ENCODE measurements at regions of chr1 and their contacts with region 1.

Region 1: DNA sequence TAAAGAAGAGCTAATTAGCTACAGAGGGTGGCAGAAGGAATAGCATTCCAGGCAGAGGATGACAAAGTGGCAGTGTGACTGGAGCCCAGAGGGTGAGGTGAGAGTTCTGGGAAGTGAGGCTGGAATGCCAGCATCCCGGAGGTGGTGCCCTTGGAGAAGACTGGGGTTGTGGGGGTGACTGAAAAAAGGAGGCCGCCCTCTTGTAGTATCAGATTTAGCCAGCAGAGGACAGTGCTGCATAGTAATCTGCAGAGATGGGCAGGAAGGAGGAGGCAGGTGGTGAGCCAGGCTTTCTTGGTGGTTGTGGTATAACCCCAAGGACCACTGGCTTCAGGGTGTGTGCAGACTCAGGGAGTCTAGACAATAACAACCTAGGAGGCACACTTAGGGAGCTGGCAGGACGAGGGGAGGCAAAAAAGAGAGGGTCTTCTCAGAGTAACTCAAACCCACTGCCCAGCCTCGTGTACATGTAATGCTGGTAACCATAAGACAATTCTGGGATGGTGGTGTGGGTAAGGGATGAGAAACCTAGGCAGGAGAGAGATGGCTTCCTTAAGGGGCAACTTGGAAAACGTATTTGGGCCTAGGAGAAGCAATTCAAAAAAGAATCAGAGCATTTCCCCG is 30.5 kb downstream of the MROH7 start:
- DNase-seq: peak; percentile 69 to 86 (median 80)
- ATAC-seq: peak; percentile 93
- H3K4me3 ChIP-seq: no peak overlapping the region
- H3K27ac ChIP-seq: no peak overlapping the region
- H3K4me1 ChIP-seq: no peaks in the 10 kb centered on the region
- H3K27me3 ChIP-seq: peaks cover 13 to 19% of the 10 kb centered on the region in 2 experiments; a peak in 4 of 5 replicates
- CTCF ChIP-seq: peak; percentile 92 to 97 (median 95)
- EP300 ChIP-seq: no peak
- POLR2A ChIP-seq: no peak
- RAD21 ChIP-seq: peak; percentile 91 to 98

Region 2: GRCh38 chr1:54571803-54572541 is 100.1 kb before region 1 on chr1:
- CTCF ChIA-PET with region 1: no interaction called
- POLR2A ChIA-PET with region 1: no interaction called
- in situ Hi-C with region 1: no loop called
- intact Hi-C with region 1: no loop called
- DNase-seq: no peak
- ATAC-seq: peak; percentile 28; the same call in 2 of the 3 replicates
- H3K4me3 ChIP-seq: no peak overlapping the region
- H3K27ac ChIP-seq: no peak overlapping the region
- H3K4me1 ChIP-seq: peaks cover 8% of the 10 kb centered on the region in 2 experiments; a peak in 4 of 5 replicates
- H3K27me3 ChIP-seq: peaks cover 9 to 42% of the 10 kb centered on the region in 2 experiments; a peak in 4 of 5 replicates
- CTCF ChIP-seq: no peak; a peak in 1 of 6 replicates
- EP300 ChIP-seq: no peak
- POLR2A ChIP-seq: no peak
- RAD21 ChIP-seq: peak in 1 of 2 experiments; percentile 5; a peak in 1 of 4 replicates

Region 3: GRCh38 chr1:54709547-54710467 is 37.7 kb after region 1 on chr1:
- CTCF ChIA-PET with region 1: no interaction called
- POLR2A ChIA-PET with region 1: no interaction called
- in situ Hi-C with region 1: no loop called
- intact Hi-C with region 1: no loop called
- DNase-seq: no peak
- ATAC-seq: no peak
- H3K4me3 ChIP-seq: no peak overlapping the region
- H3K27ac ChIP-seq: no peak overlapping the region
- H3K4me1 ChIP-seq: no peaks in the 10 kb centered on the region; a peak in 1 of 5 replicates
- H3K27me3 ChIP-seq: peaks cover 20 to 49% of the 10 kb centered on the region in 2 experiments
- CTCF ChIP-seq: no peak
- EP300 ChIP-seq: no peak
- POLR2A ChIP-seq: no peak
- RAD21 ChIP-seq: no peak

Region 4: GRCh38 chr1:54810100-54810942 is 138.2 kb after region 1 on chr1:
- CTCF ChIA-PET with region 1: interaction called, 25 read pairs
- POLR2A ChIA-PET with region 1: no interaction called
- in situ Hi-C with region 1: no loop called
- intact Hi-C with region 1: loop called (anchors 2 kb)
- DNase-seq: peak; percentile 70 to 80 (median 79)
- ATAC-seq: peak; percentile 95
- H3K4me3 ChIP-seq: no peak overlapping the region
- H3K27ac ChIP-seq: no peak overlapping the region
- H3K4me1 ChIP-seq: peaks cover 0 to 6% of the 10 kb centered on the region in 2 experiments; a peak in 1 of 5 replicates
- H3K27me3 ChIP-seq: peaks cover 22 to 60% of the 10 kb centered on the region in 2 experiments
- CTCF ChIP-seq: peak; percentile 84 to 93 (median 92)
- EP300 ChIP-seq: no peak
- POLR2A ChIP-seq: no peak
- RAD21 ChIP-seq: peak; percentile 87 to 93